Calu3 (cell line): ENCODE measurements at regions of chrX and their contacts with region 1.

Region 1: DNA sequence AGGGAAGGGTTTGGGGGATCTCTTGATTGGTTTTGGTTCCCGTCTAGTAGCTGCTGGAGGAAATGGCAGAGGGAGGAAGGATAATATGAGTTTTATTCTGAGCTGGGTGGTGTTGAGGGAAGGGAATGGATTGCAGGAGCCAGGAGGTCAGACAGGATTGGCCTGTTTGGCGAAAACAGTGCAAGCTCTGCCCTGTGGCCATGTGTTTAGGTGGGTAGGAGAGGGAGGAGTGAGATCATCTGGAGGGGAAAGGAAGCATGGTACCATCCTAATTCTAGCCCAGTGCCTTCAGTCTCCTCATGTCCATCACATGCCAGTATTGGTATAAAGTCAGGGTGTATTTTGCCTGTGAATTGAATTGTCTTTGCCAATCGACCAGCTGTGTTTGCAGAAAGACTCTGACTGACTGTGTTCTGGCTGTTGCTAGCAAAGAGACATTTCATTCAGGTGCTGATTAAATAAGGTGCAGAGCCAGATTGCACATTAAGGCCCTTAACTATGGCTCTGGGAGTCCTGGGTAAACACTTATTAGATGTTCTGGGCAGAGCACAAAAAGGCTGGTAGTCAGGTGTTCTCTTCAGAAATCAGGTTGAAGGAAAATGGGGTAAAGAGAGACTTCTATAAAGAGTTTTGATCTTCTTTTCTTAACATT is 10.0 kb downstream of the TMEM164 start:
- DNase-seq: peak; percentile 35
- H3K4me3 Mint-ChIP-seq: no peak overlapping the region
- H3K27ac Mint-ChIP-seq: no peak overlapping the region
- H3K4me1 Mint-ChIP-seq: peaks cover 11% of the 10 kb centered on the region
- H3K27me3 Mint-ChIP-seq: no peaks in the 10 kb centered on the region
- CTCF ChIP-seq: no peak

Region 2: DNA sequence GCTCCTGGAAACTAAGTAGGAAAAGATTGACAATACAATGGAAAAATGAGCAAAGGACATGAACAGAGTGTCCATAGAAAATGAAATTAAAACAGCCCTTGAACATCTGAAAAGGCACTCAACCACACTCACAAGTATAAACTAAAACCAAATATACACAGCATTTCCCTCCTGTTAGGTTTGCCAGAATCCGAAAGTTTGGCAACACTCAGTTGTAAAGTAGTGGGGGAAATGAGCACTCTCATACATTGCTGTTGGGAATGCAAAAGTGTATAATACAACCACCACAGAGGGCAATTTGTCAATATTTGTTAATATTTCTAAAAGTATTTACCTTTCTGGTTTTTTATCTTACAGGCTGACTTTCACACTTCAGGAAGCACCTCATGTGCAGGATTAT is 94.2 kb before region 1 on chrX:
- CTCF ChIA-PET with region 1: no interaction called
- intact Hi-C with region 1: loop called (anchors 5 kb)
- DNase-seq: no peak
- H3K4me3 Mint-ChIP-seq: no peak overlapping the region
- H3K27ac Mint-ChIP-seq: no peak overlapping the region
- H3K4me1 Mint-ChIP-seq: peaks cover 8% of the 10 kb centered on the region
- H3K27me3 Mint-ChIP-seq: peaks cover 14% of the 10 kb centered on the region
- CTCF ChIP-seq: no peak

Region 3: GRCh38 chrX:110036162-110037033 is 23.4 kb after region 1 on chrX:
- CTCF ChIA-PET with region 1: no interaction called
- intact Hi-C with region 1: no loop called
- DNase-seq: no peak
- H3K4me3 Mint-ChIP-seq: no peak overlapping the region
- H3K27ac Mint-ChIP-seq: no peak overlapping the region
- H3K4me1 Mint-ChIP-seq: peaks cover 35% of the 10 kb centered on the region
- H3K27me3 Mint-ChIP-seq: no peaks in the 10 kb centered on the region
- CTCF ChIP-seq: no peak